Activated CD4-positive, alpha-beta T cell treated with anti-CD3 and anti-CD28 coated beads, Interleukin-2, amount 10 ng/mL, durations not matched to agents 24 days and 14 days (primary cell): ENCODE measurements at regions of chrX and their contacts with region 1.

Region 1: GRCh38 chrX:71068049-71068763 is at the start of gene SNX12:
- DNase-seq: peak; percentile 95
- H3K4me3 Mint-ChIP-seq: peak within 1 kb of the TSS; percentile 99
- H3K27ac Mint-ChIP-seq: peak within 1 kb of the TSS; percentile 96
- H3K4me1 Mint-ChIP-seq: peaks cover 19% of the 10 kb centered on the region
- H3K27me3 Mint-ChIP-seq: peaks cover 8% of the 10 kb centered on the region
- total RNA-seq, gene SNX12: 56.0 and 57.1 TPM in 2 replicates

Region 2: GRCh38 chrX:71095543-71095911 is 27.3 kb after region 1 on chrX and contains the start of gene FOXO4:
- intact Hi-C with region 1: loop called (anchors 1 kb)
- DNase-seq: peak; percentile 96
- H3K4me3 Mint-ChIP-seq: peak within 1 kb of the TSS; percentile 89
- H3K27ac Mint-ChIP-seq: peak within 1 kb of the TSS; percentile 96
- H3K4me1 Mint-ChIP-seq: peaks cover 27% of the 10 kb centered on the region
- H3K27me3 Mint-ChIP-seq: no peaks in the 10 kb centered on the region
- total RNA-seq, gene FOXO4: 9.4 and 9.8 TPM in 2 replicates

Region 3: GRCh38 chrX:71118032-71118984 is 50.1 kb after region 1 on chrX and contains the start of gene MED12:
- intact Hi-C with region 1: loop called (anchors 1 kb)
- DNase-seq: peak; percentile 95
- H3K4me3 Mint-ChIP-seq: peak within 1 kb of the TSS; percentile 84
- H3K27ac Mint-ChIP-seq: peak within 1 kb of the TSS; percentile 86
- H3K4me1 Mint-ChIP-seq: peaks cover 16% of the 10 kb centered on the region
- H3K27me3 Mint-ChIP-seq: no peaks in the 10 kb centered on the region
- total RNA-seq, gene MED12: 61.0 and 65.9 TPM in 2 replicates

Region 4: GRCh38 chrX:71128915-71129765 is 60.9 kb after region 1 on chrX:
- intact Hi-C with region 1: loop called (anchors 1 kb)
- DNase-seq: peak; percentile 92
- H3K4me3 Mint-ChIP-seq: peak overlapping the region; percentile 59
- H3K27ac Mint-ChIP-seq: peak overlapping the region; percentile 80
- H3K4me1 Mint-ChIP-seq: peaks cover 16% of the 10 kb centered on the region
- H3K27me3 Mint-ChIP-seq: no peaks in the 10 kb centered on the region

Region 5: DNA sequence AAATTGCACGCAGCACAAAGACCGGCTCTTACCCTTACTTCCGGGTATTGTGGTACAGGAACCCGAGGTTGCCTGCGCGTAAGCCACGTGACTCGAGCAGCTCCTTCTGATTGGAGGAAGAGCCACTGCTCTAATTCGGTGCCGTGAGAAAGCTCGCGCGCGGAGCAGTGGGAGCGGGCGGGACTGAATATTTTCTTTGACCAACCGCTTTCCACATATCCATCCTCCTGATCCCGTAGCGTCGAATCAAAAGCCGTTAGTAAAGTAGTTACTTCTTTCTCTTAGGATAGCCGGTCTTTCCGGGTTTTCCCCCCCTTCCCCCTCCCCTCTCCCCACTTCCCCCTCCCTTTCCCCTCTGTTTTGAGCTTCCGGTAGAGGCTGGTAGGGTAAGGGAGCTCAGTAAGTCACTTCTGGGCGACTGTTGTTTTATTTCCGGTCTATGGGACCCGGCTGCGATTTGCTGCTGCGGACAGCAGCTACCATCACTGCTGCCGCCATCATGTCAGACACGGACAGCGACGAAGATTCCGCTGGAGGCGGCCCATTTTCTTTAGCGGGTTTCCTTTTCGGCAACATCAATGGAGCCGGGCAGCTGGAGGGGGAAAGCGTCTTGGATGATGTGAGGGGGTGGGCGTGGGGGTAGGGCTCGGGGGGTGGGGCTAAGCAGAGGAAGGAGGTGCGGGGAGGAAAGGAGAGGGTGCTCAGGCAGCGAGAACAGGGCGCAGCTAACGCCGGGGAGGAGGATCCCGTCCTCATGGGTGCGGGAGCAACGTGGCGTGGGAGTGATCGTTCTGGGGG is 297.9 kb after region 1 on chrX and contains the start of gene TAF1:
- intact Hi-C with region 1: loop called (anchors 2 kb)
- DNase-seq: peak; percentile 96
- H3K4me3 Mint-ChIP-seq: peak within 1 kb of the TSS; percentile 98
- H3K27ac Mint-ChIP-seq: peak within 1 kb of the TSS; percentile 100
- H3K4me1 Mint-ChIP-seq: peaks cover 21% of the 10 kb centered on the region
- H3K27me3 Mint-ChIP-seq: no peaks in the 10 kb centered on the region
- total RNA-seq, gene TAF1: 46.7 and 47.8 TPM in 2 replicates